ENCODE measurements at regions of chr20 and their contacts with region 1.

Region 1: DNA sequence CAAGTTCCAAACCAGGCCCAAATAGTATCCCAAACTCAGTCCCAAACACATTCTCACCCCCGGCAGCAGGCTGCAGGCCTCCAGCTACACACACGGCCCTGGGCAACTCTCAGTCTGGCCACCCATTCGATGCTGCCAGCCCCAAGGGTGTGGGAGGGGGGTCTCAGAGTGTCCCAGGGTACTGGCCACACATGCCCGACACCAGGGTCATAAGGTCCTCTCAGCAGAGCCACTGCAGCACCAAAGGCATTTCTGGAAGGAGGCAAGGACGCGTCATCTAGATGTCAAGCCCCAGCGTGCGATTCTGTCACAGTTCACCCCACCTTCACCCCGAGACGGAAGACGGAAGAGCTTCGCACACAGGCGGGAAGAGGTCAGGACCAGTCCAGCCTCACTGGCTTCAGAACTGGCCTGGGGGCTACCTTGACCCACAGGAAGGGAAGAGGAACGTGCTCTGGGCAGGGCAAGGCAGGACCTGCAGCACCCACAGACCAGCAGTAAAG is 9.5 kb downstream of the MYL9 start:
- DNase-seq: no peak
- H3K4me3 ChIP-seq: no peak overlapping the region
- H3K27ac ChIP-seq: peak overlapping the region; percentile 17
- H3K4me1 ChIP-seq: peaks cover 6% of the 10 kb centered on the region
- H3K27me3 ChIP-seq: no peaks in the 10 kb centered on the region
- CTCF ChIP-seq: no peak
- POLR2A ChIP-seq: no peak

Region 2: DNA sequence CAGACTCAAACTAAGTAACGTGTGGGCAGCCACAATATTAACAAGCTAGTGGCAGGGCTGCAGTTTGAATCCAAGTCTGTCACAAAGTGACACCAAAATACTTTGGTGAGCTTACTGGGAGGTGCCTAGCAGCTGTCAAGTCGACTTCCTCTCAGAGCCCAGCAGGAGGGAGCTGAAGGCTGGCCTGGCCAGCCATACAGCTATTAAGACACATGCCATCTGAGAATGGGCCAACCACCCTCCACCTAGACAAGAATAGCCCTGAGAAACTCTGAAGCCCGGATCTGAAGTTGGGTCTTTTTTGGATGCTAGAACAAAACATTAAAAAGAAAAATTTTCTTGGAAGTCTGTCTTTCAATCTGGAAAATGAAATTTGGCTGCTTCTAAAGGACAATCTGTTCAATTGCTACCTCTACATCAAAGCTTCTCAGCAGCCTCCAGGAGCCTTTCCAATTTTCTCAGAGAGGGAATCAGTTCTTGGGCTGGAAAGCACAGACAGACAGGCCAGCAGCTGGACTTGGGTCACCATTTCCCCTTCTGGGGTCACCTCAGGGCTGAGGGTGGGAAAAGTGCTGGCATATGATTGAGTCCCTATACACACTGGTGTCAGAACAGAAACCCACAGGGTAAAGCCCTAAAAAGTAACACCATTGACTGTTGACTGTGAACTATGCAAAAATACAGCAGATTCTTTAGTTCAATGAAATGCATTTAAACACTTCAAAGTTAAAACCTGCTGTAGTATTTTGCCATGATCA is 1182.0 kb before region 1 on chr20:
- intact Hi-C with region 1: no loop called
- DNase-seq: no peak
- H3K4me3 ChIP-seq: no peak overlapping the region
- H3K27ac ChIP-seq: no peak overlapping the region
- H3K4me1 ChIP-seq: no peaks in the 10 kb centered on the region
- H3K27me3 ChIP-seq: no peaks in the 10 kb centered on the region
- CTCF ChIP-seq: no peak
- POLR2A ChIP-seq: no peak

Region 3: DNA sequence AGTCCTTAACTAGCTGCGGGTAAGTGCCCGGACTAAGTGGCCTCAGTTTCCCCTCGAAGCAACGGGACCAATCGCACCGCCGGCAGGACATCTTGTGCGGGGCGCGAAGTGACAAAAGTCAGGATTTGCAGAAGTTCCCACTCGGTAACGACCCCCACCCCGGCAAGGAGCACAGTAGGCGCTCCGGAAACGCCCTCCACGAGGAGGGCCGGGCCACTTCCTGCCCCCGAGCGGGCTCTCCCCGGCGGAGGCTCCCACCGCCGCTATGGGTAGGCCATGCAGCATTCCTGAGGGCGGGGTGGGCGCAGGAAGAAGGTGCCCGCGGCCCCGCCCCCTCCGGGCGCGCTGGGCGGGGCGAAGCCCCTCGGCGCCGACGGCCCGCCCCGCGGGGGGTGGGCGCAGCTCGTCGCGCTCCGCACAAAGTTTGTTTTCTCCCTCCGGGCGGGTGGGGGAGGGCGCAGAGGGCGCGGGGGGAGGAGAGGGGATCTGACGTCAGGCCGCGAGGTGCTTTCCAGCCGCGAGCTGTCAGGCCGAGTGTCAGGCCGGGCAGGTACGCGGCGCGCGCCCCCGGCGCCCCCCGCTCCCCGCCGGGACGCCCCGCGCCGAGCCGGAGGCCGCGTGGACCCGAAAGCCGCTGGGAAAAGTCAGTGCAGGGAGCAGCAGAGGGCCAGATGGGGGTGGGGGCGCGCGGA is 22.4 kb after region 1 on chr20 and contains the start of gene TGIF2:
- intact Hi-C with region 1: loop called (anchors 2 kb)
- DNase-seq: no peak
- H3K4me3 ChIP-seq: peak within 1 kb of the TSS; percentile 61 to 83
- H3K27ac ChIP-seq: peak within 1 kb of the TSS; percentile 98
- H3K4me1 ChIP-seq: peaks cover 29% of the 10 kb centered on the region
- H3K27me3 ChIP-seq: no peaks in the 10 kb centered on the region
- CTCF ChIP-seq: no peak
- POLR2A ChIP-seq: peak in 1 of 2 donors; percentile 63
- total RNA-seq, gene TGIF2: 9.3 TPM

Region 4: DNA sequence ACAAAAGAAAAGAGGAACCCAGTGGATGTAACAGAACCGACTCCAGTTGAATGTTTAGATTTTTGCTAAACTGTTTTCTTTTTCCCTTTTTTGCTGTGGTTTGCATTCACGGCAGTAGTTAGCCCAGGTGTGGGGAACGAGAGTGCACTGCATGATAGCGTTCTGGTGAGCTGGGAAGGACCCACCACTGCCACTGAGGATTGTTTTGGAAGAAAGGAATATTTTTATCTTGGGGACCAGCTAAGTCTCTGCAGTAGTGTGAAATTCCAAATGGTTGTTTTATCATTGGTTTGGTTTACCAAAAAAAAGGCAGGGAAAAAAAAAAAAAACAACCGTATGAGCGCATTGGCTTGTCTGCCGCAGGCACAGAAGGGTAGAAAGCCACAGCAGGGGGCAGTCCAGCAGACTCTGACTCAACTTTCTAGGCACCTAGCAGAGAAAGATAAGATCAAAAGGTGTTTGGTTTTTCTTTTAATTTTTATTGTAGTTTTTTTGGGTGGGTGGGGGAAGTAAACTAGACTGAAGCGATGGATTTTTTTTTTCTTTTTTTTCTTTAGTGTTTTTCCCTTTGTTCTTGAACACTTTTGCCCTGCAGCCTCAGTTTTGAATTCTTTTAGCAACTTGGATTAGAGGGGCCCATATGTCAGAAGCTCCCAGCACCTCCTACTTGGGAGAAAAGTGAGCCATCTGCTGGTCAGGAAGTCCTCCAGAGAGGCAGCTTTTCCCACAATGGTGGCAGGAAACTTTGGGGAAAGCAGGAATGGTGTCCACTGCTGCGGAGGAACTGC is 41.2 kb after region 1 on chr20:
- intact Hi-C with region 1: loop called (anchors 5 kb)
- DNase-seq: no peak
- H3K4me3 ChIP-seq: no peak overlapping the region
- H3K27ac ChIP-seq: no peak overlapping the region
- H3K4me1 ChIP-seq: no peaks in the 10 kb centered on the region
- H3K27me3 ChIP-seq: no peaks in the 10 kb centered on the region
- CTCF ChIP-seq: peak; percentile 15 to 31 (median 27)
- POLR2A ChIP-seq: no peak

Region 5: GRCh38 chr20:36773597-36774390 is 222.9 kb after region 1 on chr20 and contains the start of gene DSN1:
- intact Hi-C with region 1: no loop called
- DNase-seq: peak; percentile 97 to 99
- H3K4me3 ChIP-seq: peak within 1 kb of the TSS; percentile 54 to 68
- H3K27ac ChIP-seq: peak within 1 kb of the TSS; percentile 99
- H3K4me1 ChIP-seq: peaks cover 22% of the 10 kb centered on the region
- H3K27me3 ChIP-seq: no peaks in the 10 kb centered on the region
- CTCF ChIP-seq: no peak
- POLR2A ChIP-seq: peak in 1 of 2 donors; percentile 76
- total RNA-seq, gene DSN1: 4.7 TPM